Ovary (tissue), 10 donors: ENCODE measurements at regions of chr11 and their contacts with region 1.

Region 1: DNA sequence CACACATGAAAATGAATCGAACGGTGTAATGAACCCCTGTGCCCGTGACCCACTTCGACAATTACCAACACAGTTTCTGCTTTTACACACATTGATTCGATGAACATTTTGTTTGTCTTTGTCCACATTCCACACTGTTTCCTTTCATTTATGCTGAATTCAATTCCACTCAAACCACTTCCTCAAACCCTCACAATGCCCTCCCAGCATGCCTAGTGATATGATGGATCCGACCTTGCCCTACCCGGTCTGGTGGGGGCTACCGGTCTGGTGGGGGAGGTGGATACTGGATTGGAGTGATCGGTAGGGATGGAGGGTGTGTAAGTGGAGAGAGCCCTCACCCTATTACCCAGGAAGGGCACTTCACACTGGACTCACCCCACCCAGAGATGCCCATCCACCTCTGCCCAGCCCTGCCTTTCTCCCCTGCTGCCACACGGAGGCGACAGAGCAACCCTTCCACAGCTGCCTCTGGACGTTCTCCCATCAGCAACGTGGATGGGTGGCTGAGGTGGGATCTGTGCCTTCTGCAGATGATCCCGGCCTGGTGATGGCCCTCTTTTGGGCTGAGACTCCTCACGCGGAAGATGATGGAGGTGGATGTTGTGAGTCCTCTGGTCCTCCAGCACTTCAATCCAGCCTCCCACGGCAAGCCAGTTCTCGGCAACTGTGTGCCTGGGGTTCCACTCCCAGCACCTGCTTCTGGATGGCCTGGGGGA is 33.0 kb upstream of the P2RY2 start:
- DNase-seq: peak in 1 of 5 donors; percentile 69
- H3K4me3 ChIP-seq: no peak overlapping the region
- H3K27ac ChIP-seq: no peak overlapping the region
- H3K4me1 ChIP-seq: peaks cover 14% of the 10 kb centered on the region
- H3K27me3 ChIP-seq: no peaks in the 10 kb centered on the region
- CTCF ChIP-seq: peak; percentile 17 to 42 (median 24)
- EP300 ChIP-seq: no peak
- POLR2A ChIP-seq: no peak

Region 2: DNA sequence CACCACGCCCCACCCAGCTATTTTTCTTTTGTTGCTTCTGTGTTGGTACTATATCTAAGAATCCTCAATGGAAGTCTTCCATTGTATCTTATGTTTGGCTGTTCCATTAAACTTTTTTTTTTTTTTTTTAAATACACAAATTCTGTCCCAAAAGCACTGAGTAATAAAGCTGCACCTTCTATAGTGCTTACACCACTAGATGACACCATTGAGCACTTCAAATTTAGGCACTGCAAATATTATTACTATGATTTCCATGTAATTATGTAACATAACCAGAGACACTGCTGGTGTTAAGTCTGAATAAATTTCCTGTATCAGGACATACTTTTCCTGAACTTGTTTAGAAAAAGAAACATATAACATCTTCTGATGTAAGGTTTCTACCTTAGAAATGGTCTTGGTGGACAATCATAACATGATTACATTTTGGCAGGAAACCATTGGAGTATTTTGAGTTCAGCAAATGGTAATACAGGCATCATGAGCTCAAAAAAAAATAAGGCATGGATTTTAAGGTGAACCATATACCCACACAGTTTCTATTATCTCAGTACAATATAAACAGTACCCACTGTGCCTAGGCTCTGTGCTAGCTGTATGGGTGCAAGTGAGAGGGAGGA is 260.4 kb before region 1 on chr11:
- intact Hi-C with region 1: no loop called
- DNase-seq: no peak
- H3K4me3 ChIP-seq: no peak overlapping the region
- H3K27ac ChIP-seq: no peak overlapping the region
- H3K4me1 ChIP-seq: peaks cover 5% of the 10 kb centered on the region
- H3K27me3 ChIP-seq: no peaks in the 10 kb centered on the region
- CTCF ChIP-seq: peak in 2 of 3 donors; percentile 35 to 48
- EP300 ChIP-seq: no peak
- POLR2A ChIP-seq: no peak

Region 3: GRCh38 chr11:73236854-73237253 is 51.7 kb after region 1 on chr11:
- intact Hi-C with region 1: loop called in 2 of 4 experiments (anchors 5 kb)
- DNase-seq: peak in 2 of 5 donors; percentile 18 to 38
- H3K4me3 ChIP-seq: no peak overlapping the region
- H3K27ac ChIP-seq: no peak overlapping the region
- H3K4me1 ChIP-seq: peaks cover 3% of the 10 kb centered on the region
- H3K27me3 ChIP-seq: no peaks in the 10 kb centered on the region
- CTCF ChIP-seq: no peak
- EP300 ChIP-seq: no peak
- POLR2A ChIP-seq: no peak

Region 4: GRCh38 chr11:73242251-73243079 is 57.4 kb after region 1 on chr11:
- intact Hi-C with region 1: loop called in 2 of 4 experiments (anchors 5 kb)
- DNase-seq: peak; percentile 73 to 90 (median 78)
- H3K4me3 ChIP-seq: peak overlapping the region; percentile 11
- H3K27ac ChIP-seq: no peak overlapping the region
- H3K4me1 ChIP-seq: peaks cover 2% of the 10 kb centered on the region
- H3K27me3 ChIP-seq: no peaks in the 10 kb centered on the region
- CTCF ChIP-seq: peak; percentile 64 to 79 (median 73)
- EP300 ChIP-seq: no peak
- POLR2A ChIP-seq: no peak

Region 5: DNA sequence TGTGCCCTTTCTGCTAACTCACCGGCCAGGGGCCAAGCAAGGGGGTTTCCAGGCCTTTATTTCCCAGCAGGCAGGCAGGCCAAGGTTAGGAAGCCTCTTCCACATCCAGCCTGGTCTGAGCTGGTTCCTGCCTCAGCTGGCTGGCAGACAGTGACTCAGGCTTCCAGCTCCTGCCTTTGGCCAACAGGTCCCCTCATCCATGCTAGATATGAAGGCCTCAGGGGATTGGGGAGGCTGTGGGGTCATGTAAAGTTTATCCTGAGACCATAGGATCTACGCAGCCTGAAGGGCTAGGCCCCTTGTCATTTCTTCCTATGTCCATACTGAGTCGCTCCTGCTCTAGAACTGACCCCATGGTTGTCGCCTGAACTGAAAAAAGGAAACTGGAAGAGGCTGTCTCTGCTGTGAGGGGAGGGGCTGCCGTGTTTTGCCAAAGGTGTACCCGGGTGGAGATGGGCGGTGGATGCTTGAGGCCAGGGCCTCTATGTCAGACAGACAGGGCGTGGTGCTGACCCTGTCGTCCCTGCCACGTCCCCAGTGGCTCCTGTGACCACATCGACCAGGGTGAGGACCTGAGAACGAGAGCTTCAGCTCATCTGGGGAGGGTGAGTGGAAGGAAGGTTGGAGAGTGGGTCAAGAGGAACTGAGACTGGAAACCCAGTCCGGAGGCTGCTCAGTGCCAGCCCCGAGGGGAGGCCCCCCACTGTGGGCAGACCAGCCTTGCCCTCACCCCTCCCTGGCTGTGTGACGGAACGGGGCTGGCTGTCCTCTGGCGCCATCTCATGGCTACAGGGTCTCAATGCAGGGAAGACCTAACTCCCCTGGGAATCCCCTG is 104.0 kb after region 1 on chr11:
- intact Hi-C with region 1: loop called in 1 of 4 experiments (anchors 10 kb)
- DNase-seq: peak; percentile 65 to 77 (median 74)
- H3K4me3 ChIP-seq: no peak overlapping the region
- H3K27ac ChIP-seq: no peak overlapping the region
- H3K4me1 ChIP-seq: no peaks in the 10 kb centered on the region
- H3K27me3 ChIP-seq: no peaks in the 10 kb centered on the region
- CTCF ChIP-seq: peak; percentile 86 to 91 (median 89)
- EP300 ChIP-seq: no peak
- POLR2A ChIP-seq: no peak